CD8-positive, alpha-beta T cell (primary cell): ENCODE measurements at regions of chr6 and their contacts with region 1.

Region 1: GRCh38 chr6:109382576-109383437 is 540 bp upstream of the CD164 start:
- DNase-seq: peak; percentile 85 to 97 (median 91)
- ATAC-seq: peak; percentile 66
- H3K4me3 ChIP-seq: peak overlapping the region; percentile 61 to 78
- H3K4me3 Mint-ChIP-seq: peak overlapping the region; percentile 93
- H3K27ac ChIP-seq: peak overlapping the region; percentile 83 to 99
- H3K27ac Mint-ChIP-seq: peak overlapping the region; percentile 99
- H3K4me1 ChIP-seq: peaks cover 33% of the 10 kb centered on the region
- H3K4me1 Mint-ChIP-seq: peaks cover 45% of the 10 kb centered on the region
- H3K27me3 ChIP-seq: no peaks in the 10 kb centered on the region
- H3K27me3 Mint-ChIP-seq: no peaks in the 10 kb centered on the region
- CTCF ChIP-seq: peak; percentile 73

Region 2: DNA sequence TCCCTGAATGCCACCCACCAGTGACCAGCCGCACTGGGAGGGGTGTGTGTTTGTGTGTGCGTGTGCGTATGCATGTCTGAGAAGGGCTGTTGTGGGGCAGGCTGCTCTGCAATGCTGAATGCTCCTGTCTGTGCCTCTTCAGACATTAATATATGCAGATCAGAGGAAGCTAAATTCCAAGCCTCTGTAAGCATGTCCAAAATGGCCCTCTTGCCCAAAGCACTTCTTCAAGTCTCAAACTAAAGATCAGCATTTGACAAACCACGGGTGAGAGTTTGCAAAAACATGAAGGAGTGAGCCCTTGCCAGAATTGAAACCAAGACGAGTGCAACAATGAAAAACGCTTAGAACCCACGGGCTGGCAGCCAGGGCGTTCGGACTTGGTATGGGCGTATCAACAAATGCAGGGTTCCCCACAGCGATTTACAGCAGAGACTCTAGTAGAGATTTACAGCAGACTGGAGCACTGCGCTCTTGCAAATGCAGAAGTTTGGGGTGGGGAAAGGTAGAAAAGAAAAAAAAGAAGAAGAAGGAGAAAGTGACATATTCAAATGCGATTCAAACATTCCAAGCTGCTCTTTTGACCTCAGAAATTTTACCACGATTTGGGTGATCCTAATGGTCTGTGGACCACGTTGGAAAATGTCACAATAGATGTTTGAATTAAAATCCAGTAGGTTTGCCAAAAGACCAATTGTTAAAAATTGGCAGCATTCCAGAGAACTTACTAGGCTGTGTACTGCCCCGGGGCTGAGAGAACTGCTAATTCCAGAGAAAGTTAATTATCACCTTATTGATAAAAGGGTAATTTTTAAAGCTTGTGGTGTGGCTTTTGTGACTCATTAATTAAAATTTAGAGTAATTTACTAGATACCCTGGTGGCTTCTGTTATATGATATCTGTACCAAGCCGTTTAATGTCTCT is 1562.2 kb before region 1 on chr6:
- CTCF ChIA-PET with region 1: no interaction called
- POLR2A ChIA-PET with region 1: no interaction called
- intact Hi-C with region 1: loop called in 1 of 2 experiments (anchors 5 kb)
- DNase-seq: peak; percentile 15 to 78 (median 54)
- ATAC-seq: no peak
- H3K4me3 ChIP-seq: peak overlapping the region; percentile 72 to 92
- H3K4me3 Mint-ChIP-seq: peak overlapping the region; percentile 92
- H3K27ac ChIP-seq: peak overlapping the region; percentile 81 to 90
- H3K27ac Mint-ChIP-seq: peak overlapping the region; percentile 96
- H3K4me1 ChIP-seq: peaks cover 65% of the 10 kb centered on the region
- H3K4me1 Mint-ChIP-seq: peaks cover 82% of the 10 kb centered on the region
- H3K27me3 ChIP-seq: no peaks in the 10 kb centered on the region
- H3K27me3 Mint-ChIP-seq: no peaks in the 10 kb centered on the region
- CTCF ChIP-seq: no peak

Region 3: DNA sequence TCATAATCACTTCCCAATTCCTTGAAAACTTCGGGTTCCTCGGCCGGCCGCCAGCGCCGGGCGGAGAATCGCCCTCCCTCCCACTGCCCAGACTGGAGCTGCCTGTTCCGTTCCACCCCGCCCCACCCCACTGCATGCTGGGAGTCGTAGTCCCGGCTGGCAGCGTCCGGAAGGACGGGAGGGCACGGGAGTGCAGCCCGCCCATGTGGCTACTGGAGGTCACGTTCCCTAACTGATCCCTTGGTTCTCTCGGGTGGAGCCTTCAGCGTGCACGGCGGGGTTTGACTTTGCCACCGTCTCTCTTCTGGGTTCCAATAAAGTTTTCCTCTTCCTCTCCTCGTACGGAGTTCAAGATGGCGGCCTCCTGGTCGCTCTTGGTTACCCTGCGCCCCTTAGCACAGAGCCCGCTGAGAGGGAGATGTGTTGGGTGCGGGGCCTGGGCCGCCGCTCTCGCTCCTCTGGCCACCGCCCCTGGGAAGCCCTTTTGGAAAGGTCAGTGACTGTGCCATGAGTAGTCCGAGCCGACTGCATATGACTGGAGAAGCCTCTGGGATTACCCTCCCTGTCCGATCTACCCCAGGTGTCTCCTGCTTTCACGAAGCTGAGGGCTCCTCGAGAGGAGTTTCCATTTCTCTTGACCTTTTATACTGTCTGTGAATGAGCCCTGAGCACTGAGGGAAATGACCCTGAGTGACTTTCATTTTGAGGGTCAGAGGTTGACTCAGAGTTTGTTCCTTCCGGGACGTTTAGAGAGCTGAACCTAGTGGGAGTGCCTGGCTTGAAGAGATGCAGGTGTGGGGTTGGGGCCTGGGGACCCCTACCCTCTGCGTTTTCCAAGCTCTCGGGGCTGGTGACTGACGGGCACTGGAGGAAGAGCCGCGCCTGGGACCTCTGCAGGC is 1087.8 kb before region 1 on chr6 and contains the start of gene AFG1L:
- CTCF ChIA-PET with region 1: no interaction called
- POLR2A ChIA-PET with region 1: no interaction called
- intact Hi-C with region 1: loop called in 1 of 2 experiments (anchors 10 kb)
- DNase-seq: peak; percentile 72 to 92 (median 86)
- ATAC-seq: peak; percentile 92
- H3K4me3 ChIP-seq: peak within 1 kb of the TSS; percentile 94 to 96
- H3K4me3 Mint-ChIP-seq: peak within 1 kb of the TSS; percentile 89
- H3K27ac ChIP-seq: peak within 1 kb of the TSS; percentile 94 to 95
- H3K27ac Mint-ChIP-seq: peak within 1 kb of the TSS; percentile 97
- H3K4me1 ChIP-seq: peaks cover 13% of the 10 kb centered on the region
- H3K4me1 Mint-ChIP-seq: peaks cover 26% of the 10 kb centered on the region
- H3K27me3 ChIP-seq: no peaks in the 10 kb centered on the region
- H3K27me3 Mint-ChIP-seq: no peaks in the 10 kb centered on the region
- CTCF ChIP-seq: no peak
- total RNA-seq, gene AFG1L: 3.3 to 4.0 TPM

Region 4: GRCh38 chr6:108848116-108848868 is 534.5 kb before region 1 on chr6 and contains the start of gene ARMC2:
- CTCF ChIA-PET with region 1: interaction called, 3 read pairs
- POLR2A ChIA-PET with region 1: no interaction called
- intact Hi-C with region 1: loop called in 1 of 2 experiments (anchors 2 kb)
- DNase-seq: peak; percentile 65 to 94 (median 85)
- ATAC-seq: peak; percentile 88
- H3K4me3 ChIP-seq: peak within 1 kb of the TSS; percentile 63 to 80
- H3K4me3 Mint-ChIP-seq: peak within 1 kb of the TSS; percentile 88
- H3K27ac ChIP-seq: peak within 1 kb of the TSS; percentile 67 to 73
- H3K27ac Mint-ChIP-seq: peak within 1 kb of the TSS; percentile 66
- H3K4me1 ChIP-seq: peaks cover 11% of the 10 kb centered on the region
- H3K4me1 Mint-ChIP-seq: peaks cover 29% of the 10 kb centered on the region
- H3K27me3 ChIP-seq: no peaks in the 10 kb centered on the region
- H3K27me3 Mint-ChIP-seq: no peaks in the 10 kb centered on the region
- CTCF ChIP-seq: no peak
- total RNA-seq, gene ARMC2: 4.2 to 6.1 TPM

Region 5: GRCh38 chr6:109284675-109285074 is 98.1 kb before region 1 on chr6:
- CTCF ChIA-PET with region 1: no interaction called
- POLR2A ChIA-PET with region 1: no interaction called
- intact Hi-C with region 1: no loop called
- DNase-seq: no peak
- ATAC-seq: no peak
- H3K4me3 ChIP-seq: no peak overlapping the region
- H3K4me3 Mint-ChIP-seq: no peak overlapping the region
- H3K27ac ChIP-seq: no peak overlapping the region
- H3K27ac Mint-ChIP-seq: no peak overlapping the region
- H3K4me1 ChIP-seq: no peaks in the 10 kb centered on the region
- H3K4me1 Mint-ChIP-seq: no peaks in the 10 kb centered on the region
- H3K27me3 ChIP-seq: no peaks in the 10 kb centered on the region
- H3K27me3 Mint-ChIP-seq: peaks cover 2% of the 10 kb centered on the region
- CTCF ChIP-seq: no peak

Region 6: DNA sequence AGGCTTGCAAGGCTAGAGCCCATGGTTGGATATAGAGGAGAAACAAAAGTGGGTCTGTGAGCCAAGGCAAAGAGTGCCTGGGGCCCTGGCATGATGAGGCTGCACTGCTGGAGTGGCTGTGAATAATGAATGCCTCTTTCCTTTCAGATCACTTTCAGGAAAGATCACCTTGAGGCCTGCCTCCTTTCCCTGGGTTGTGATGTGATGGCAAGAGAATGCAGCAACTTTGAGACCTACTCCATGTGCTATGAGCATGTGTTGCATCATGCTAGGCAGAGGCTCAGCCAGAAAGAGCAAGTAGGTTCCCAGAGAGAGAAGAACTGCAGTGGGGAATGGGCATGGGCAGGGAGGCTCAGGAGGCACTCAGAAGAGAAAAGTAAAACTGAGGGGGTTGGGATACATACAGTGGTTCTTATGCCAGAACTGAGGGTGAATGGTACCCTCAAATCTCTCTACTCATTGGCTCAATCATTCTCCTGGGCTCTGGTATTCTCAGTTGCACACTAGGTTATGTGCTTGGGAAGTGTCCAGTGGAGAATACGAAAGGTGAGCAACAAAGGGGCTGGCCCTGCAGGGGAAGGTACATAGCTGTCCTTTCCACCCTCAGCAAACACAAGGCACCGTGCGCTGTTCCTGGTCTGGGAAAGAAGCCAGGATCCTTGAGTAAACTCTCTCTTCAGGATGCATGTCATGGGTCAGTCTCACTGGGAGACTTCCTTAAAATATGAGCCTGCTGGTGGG is 46.4 kb before region 1 on chr6:
- CTCF ChIA-PET with region 1: no interaction called
- POLR2A ChIA-PET with region 1: no interaction called
- intact Hi-C with region 1: no loop called
- DNase-seq: no peak
- ATAC-seq: no peak
- H3K4me3 ChIP-seq: no peak overlapping the region
- H3K4me3 Mint-ChIP-seq: no peak overlapping the region
- H3K27ac ChIP-seq: no peak overlapping the region
- H3K27ac Mint-ChIP-seq: no peak overlapping the region
- H3K4me1 ChIP-seq: no peaks in the 10 kb centered on the region
- H3K4me1 Mint-ChIP-seq: peaks cover 3% of the 10 kb centered on the region
- H3K27me3 ChIP-seq: no peaks in the 10 kb centered on the region
- H3K27me3 Mint-ChIP-seq: no peaks in the 10 kb centered on the region
- CTCF ChIP-seq: no peak

Region 7: GRCh38 chr6:109397020-109397419 is 14.2 kb after region 1 on chr6:
- CTCF ChIA-PET with region 1: interaction called, 27 read pairs
- POLR2A ChIA-PET with region 1: interaction called, 8 read pairs
- intact Hi-C with region 1: no loop called
- DNase-seq: no peak
- ATAC-seq: no peak
- H3K4me3 ChIP-seq: no peak overlapping the region
- H3K4me3 Mint-ChIP-seq: no peak overlapping the region
- H3K27ac ChIP-seq: no peak overlapping the region
- H3K27ac Mint-ChIP-seq: no peak overlapping the region
- H3K4me1 ChIP-seq: no peaks in the 10 kb centered on the region
- H3K4me1 Mint-ChIP-seq: peaks cover 3% of the 10 kb centered on the region
- H3K27me3 ChIP-seq: no peaks in the 10 kb centered on the region
- H3K27me3 Mint-ChIP-seq: no peaks in the 10 kb centered on the region
- CTCF ChIP-seq: no peak

Region 8: DNA sequence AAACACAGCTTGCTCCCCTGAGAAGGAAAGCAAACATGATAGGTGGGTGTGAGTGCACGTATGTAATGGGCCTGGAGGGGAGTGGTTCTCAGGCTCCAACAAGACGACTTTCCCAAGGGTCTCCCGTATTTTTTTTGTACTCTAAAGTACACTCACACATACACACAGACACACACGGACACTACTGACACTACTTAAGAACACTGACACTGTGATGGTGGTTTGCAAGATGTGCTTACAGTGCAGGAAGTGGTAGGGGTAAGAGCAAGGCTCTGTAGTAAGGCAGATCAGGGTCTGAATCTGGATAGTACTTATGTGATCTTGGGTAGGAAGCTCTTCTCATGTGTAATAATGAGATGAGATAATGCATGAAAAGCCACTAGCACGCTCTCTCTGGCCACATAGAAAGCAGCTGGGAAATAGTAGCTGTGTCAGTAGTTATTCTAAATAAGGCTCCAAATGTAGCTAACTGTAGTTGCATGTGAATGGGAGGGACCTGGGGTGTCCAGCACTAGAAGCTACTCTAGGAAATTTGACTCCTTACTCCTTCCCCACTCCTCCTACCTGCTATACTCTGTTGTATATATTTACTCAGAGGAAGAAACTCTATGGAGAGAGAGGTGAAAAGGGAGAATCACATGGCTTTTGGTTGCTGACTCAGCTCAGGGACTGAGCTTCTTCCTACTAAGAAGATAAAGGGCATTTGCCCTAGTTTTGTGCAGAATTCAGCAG is 108.6 kb after region 1 on chr6:
- CTCF ChIA-PET with region 1: interaction called, 7 read pairs
- POLR2A ChIA-PET with region 1: interaction called, 11 read pairs
- intact Hi-C with region 1: no loop called
- DNase-seq: peak in 5 of 9 experiments; percentile 13 to 66 (median 51)
- ATAC-seq: peak; percentile 98
- H3K4me3 ChIP-seq: no peak overlapping the region
- H3K4me3 Mint-ChIP-seq: peak overlapping the region; percentile 44
- H3K27ac ChIP-seq: peak overlapping the region in 1 of 2 experiments; percentile 65
- H3K27ac Mint-ChIP-seq: peak overlapping the region; percentile 85
- H3K4me1 ChIP-seq: peaks cover 16% of the 10 kb centered on the region
- H3K4me1 Mint-ChIP-seq: peaks cover 21% of the 10 kb centered on the region
- H3K27me3 ChIP-seq: no peaks in the 10 kb centered on the region
- H3K27me3 Mint-ChIP-seq: no peaks in the 10 kb centered on the region
- CTCF ChIP-seq: no peak

Region 9: GRCh38 chr6:110873981-110874879 is 1491.4 kb after region 1 on chr6 and contains the start of gene AMD1:
- CTCF ChIA-PET with region 1: interaction called, 3 read pairs
- POLR2A ChIA-PET with region 1: interaction called, 11 read pairs
- intact Hi-C with region 1: loop called in 1 of 2 experiments (anchors 5 kb)
- DNase-seq: peak; percentile 89 to 98 (median 96)
- ATAC-seq: peak; percentile 71
- H3K4me3 ChIP-seq: peak within 1 kb of the TSS; percentile 83 to 90
- H3K4me3 Mint-ChIP-seq: peak within 1 kb of the TSS; percentile 99
- H3K27ac ChIP-seq: peak within 1 kb of the TSS; percentile 92 to 95
- H3K27ac Mint-ChIP-seq: peak within 1 kb of the TSS; percentile 99
- H3K4me1 ChIP-seq: peaks cover 25% of the 10 kb centered on the region
- H3K4me1 Mint-ChIP-seq: peaks cover 33% of the 10 kb centered on the region
- H3K27me3 ChIP-seq: no peaks in the 10 kb centered on the region
- H3K27me3 Mint-ChIP-seq: no peaks in the 10 kb centered on the region
- CTCF ChIP-seq: no peak
- total RNA-seq, gene AMD1: 161 to 167 TPM